Caco-2 (cell line): ENCODE measurements at regions of chr22 and their contacts with region 1.

Region 1: GRCh38 chr22:31068970-31069369 is 12.1 kb upstream of the SMTN start:
- DNase-seq: no peak
- H3K4me3 ChIP-seq: no peak overlapping the region
- H3K4me3 Mint-ChIP-seq: no peak overlapping the region
- H3K27ac Mint-ChIP-seq: no peak overlapping the region
- H3K4me1 ChIP-seq: peaks cover 16% of the 10 kb centered on the region; the same call in 1 of the 2 replicates
- H3K4me1 Mint-ChIP-seq: peaks cover 25% of the 10 kb centered on the region
- H3K27me3 ChIP-seq: no peaks in the 10 kb centered on the region
- H3K27me3 Mint-ChIP-seq: no peaks in the 10 kb centered on the region
- CTCF ChIP-seq: no peak

Region 2: DNA sequence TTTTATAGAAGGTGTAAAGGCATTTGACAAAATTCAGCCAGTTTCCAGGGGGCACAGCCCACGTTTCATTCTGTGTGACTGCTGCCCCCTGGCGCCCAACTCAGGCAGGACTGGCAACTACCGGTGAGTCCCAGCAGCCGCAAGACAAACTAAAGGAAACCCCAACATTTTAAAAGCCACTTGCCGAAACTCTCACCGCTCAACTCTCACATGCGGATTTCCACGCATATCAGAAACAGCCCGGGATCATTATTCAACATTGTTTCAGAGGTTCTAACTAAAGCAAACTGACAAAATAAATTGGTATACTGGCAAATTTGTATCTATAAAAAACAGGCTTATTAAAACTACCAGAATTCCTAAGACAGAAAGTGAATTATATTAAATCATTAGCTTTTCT is 148.6 kb before region 1 on chr22:
- CTCF ChIA-PET with region 1: interaction called, 15 read pairs
- POLR2A ChIA-PET with region 1: interaction called, 4 read pairs
- intact Hi-C with region 1: no loop called
- DNase-seq: peak; percentile 73 to 84
- H3K4me3 ChIP-seq: peak overlapping the region; percentile 49
- H3K4me3 Mint-ChIP-seq: peak overlapping the region; percentile 60
- H3K27ac Mint-ChIP-seq: no peak overlapping the region
- H3K4me1 ChIP-seq: no peaks in the 10 kb centered on the region
- H3K4me1 Mint-ChIP-seq: peaks cover 5% of the 10 kb centered on the region
- H3K27me3 ChIP-seq: no peaks in the 10 kb centered on the region
- H3K27me3 Mint-ChIP-seq: no peaks in the 10 kb centered on the region
- CTCF ChIP-seq: peak; percentile 91 to 93